Endothelial cell of umbilical vein (primary cell): ENCODE measurements at regions of chr16 and their contacts with region 1.

Region 1: GRCh38 chr16:69741919-69742904 is 12.5 kb downstream of the NOB1 start:
- DNase-seq: peak; percentile 73
- H3K4me3 ChIP-seq: no peak overlapping the region
- H3K27ac ChIP-seq: no peak overlapping the region
- H3K4me1 ChIP-seq: peaks cover 18% of the 10 kb centered on the region
- H3K27me3 ChIP-seq: no peaks in the 10 kb centered on the region
- CTCF ChIP-seq: no peak
- POLR2A ChIP-seq: no peak

Region 2: DNA sequence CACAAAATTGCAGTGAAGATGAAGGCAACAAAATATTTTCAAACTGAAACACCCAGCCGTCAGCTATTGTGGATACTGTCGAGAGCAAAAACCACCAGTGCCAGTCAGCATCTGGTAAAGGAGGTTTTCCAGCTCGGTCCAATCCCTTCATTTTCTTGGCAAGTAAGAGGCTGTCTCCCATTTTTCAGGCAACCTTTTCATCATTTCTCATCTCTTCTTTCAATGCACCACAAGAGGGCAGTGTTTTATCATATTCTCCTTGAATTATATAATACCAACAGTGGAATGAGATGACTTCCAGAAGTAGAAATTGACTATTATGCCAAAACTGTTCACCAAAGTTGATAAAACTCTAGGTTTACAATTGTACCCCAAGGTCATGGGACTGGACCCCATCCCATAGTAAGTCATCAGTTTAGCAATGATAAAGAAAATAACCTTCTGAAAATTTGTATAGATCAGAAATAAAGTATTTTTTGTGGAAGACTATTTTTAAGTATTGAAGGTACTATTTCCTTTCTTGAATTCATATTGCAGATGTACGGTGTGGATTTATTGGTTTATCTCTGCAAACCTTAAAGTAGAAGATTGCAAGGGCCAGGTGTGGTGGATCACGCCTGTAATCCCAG is 32.6 kb before region 1 on chr16:
- CTCF ChIA-PET with region 1: no interaction called
- POLR2A ChIA-PET with region 1: no interaction called
- dilution Hi-C with region 1: no loop called
- intact Hi-C with region 1: loop called (anchors 2 kb)
- DNase-seq: peak; percentile 71
- H3K4me3 ChIP-seq: no peak overlapping the region
- H3K27ac ChIP-seq: no peak overlapping the region
- H3K4me1 ChIP-seq: no peaks in the 10 kb centered on the region
- H3K27me3 ChIP-seq: no peaks in the 10 kb centered on the region
- CTCF ChIP-seq: peak; percentile 37 to 55
- POLR2A ChIP-seq: no peak